Colonic mucosa (tissue), 4 donors: ENCODE measurements at regions of chr13 and their contacts with region 1.

Region 1: GRCh38 chr13:80342471-80343380 is 1.8 kb upstream of the SPRY2 start:
- DNase-seq: peak; percentile 89
- H3K4me3 ChIP-seq: peak overlapping the region; percentile 55
- H3K27ac ChIP-seq: peak overlapping the region; percentile 98
- H3K4me1 ChIP-seq: no peaks in the 10 kb centered on the region
- H3K27me3 ChIP-seq: no peaks in the 10 kb centered on the region
- CTCF ChIP-seq: peak; percentile 99

Region 2: DNA sequence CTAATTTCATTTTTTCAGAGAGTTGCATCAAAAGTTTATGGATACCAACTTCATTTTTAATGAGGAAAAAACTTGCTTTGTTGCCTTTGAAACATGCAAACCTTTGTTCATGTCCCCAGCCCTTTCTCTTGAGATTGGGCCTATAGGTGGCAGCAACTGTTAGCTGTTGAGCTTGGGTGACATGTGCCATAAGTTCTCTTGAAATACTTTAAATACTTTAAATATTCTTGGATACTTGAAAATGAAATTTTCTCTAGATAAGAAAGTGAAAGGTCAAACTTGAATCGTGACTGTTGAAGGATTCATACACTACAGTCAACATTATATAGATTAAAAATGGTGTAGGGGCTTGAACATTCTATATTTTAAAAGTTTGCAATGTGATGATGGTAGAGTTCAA is 566.9 kb before region 1 on chr13:
- intact Hi-C with region 1: loop called (anchors 5 kb)
- DNase-seq: peak; percentile 61
- H3K4me3 ChIP-seq: no peak overlapping the region
- H3K27ac ChIP-seq: peak overlapping the region; percentile 21
- H3K4me1 ChIP-seq: no peaks in the 10 kb centered on the region
- H3K27me3 ChIP-seq: no peaks in the 10 kb centered on the region
- CTCF ChIP-seq: peak; percentile 51

Region 3: DNA sequence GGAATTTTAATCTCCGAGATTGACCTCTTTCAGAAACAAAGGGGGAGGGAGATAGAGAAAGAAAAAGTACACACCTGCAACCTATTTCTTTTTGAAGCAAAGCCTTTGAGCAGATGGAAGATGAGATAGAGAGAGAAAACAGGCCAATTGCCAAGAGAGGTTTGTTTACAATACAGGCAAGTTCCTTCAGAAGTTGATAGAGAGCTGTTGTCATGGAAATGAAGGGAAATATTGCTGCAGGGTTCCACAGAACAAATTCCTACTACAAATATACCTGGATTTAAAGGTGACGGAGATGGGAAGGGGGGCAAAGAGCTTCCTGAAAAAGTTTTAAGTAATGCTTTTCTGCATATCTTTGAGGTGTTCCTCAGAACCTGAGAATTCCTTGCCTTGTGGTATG is 473.4 kb before region 1 on chr13:
- intact Hi-C with region 1: loop called (anchors 10 kb)
- DNase-seq: no peak
- H3K4me3 ChIP-seq: no peak overlapping the region
- H3K27ac ChIP-seq: no peak overlapping the region
- H3K4me1 ChIP-seq: no peaks in the 10 kb centered on the region
- H3K27me3 ChIP-seq: no peaks in the 10 kb centered on the region
- CTCF ChIP-seq: no peak

Region 4: DNA sequence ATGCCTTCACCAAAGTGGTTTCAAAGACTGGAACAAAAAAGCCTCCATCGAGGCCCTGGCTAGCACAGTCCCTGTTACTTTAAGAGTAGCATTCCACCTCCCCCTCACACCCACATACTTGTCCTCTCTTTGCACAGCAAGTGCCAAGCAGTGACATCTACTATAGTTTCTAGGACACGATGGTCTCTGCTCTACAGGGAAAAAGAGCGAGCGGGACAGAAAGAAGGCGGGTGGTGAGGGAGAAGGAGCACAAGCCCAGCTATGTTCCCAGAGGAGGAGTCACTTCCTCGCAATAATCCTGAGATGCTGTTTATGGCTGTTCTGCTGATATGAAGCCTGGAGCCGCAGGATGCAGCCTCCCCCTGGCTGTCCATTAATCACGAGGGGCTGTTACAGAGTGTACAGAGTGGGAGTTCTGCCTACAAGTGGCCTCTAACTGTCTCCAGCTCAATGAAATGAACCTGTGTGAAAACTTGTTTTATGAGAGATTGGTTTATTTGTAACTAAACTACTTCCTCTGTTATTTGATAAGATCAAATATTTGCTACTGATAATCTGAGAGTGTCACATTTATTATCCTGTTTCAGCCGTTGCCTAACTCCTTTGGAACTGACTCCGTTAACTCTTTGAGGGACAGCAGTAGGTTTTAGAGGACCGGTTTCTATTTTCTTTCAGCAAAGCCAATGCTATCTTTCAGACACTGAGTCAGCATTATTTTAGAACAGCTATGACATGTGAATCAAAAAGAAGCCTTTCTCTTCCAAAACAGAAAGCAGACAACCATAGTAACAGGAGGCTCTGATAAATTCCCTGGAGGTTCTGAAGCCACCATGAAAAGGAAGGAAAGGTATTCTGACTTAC is 209.8 kb before region 1 on chr13:
- intact Hi-C with region 1: loop called (anchors 5 kb)
- DNase-seq: peak; percentile 87
- H3K4me3 ChIP-seq: peak overlapping the region; percentile 0
- H3K27ac ChIP-seq: peak overlapping the region; percentile 75
- H3K4me1 ChIP-seq: peaks cover 11% of the 10 kb centered on the region
- H3K27me3 ChIP-seq: no peaks in the 10 kb centered on the region
- CTCF ChIP-seq: no peak

Region 5: DNA sequence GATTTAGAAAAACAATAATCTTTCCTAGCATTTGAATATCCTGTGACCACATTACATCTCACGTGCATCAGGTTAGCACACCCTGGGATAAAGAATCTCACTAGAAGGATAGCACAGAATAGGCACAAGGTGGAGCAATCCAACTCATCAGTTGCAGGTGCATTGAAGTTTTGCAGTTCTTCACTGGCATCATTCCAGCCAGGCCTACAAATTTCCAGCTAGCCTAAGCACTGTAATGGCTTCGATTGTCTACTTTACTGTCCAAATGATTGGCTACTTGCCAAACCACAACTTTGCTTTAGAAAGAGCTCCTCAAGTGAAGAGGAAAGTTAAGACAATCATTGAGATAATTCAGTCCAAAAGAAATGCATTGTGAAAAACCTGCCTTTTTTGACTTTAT is 91.3 kb before region 1 on chr13:
- intact Hi-C with region 1: loop called (anchors 10 kb)
- DNase-seq: no peak
- H3K4me3 ChIP-seq: no peak overlapping the region
- H3K27ac ChIP-seq: no peak overlapping the region
- H3K4me1 ChIP-seq: no peaks in the 10 kb centered on the region
- H3K27me3 ChIP-seq: no peaks in the 10 kb centered on the region
- CTCF ChIP-seq: no peak